SK-N-SH (cell line): ENCODE measurements at regions of chr3 and their contacts with region 1.

Region 1: GRCh38 chr3:132343018-132343612 is 25.9 kb downstream of the ACP3 start:
- DNase-seq: peak; percentile 41
- H3K4me3 ChIP-seq: peak overlapping the region in 1 of 2 experiments; percentile 25; a peak in 1 of 4 replicates
- H3K27ac ChIP-seq: no peak overlapping the region
- H3K4me1 ChIP-seq: no peaks in the 10 kb centered on the region
- H3K27me3 ChIP-seq: peaks cover 6% of the 10 kb centered on the region; the same call in 1 of the 2 replicates
- CTCF ChIP-seq: peak; percentile 82
- EP300 ChIP-seq: no peak
- RAD21 ChIP-seq: peak; percentile 77

Region 2: GRCh38 chr3:132253262-132253878 is 89.7 kb before region 1 on chr3:
- CTCF ChIA-PET with region 1: interaction called, 126 read pairs
- POLR2A ChIA-PET with region 1: no interaction called
- DNase-seq: peak; percentile 45
- H3K4me3 ChIP-seq: peak overlapping the region in 1 of 2 experiments; percentile 10; a peak in 1 of 4 replicates
- H3K27ac ChIP-seq: no peak overlapping the region
- H3K4me1 ChIP-seq: no peaks in the 10 kb centered on the region; a peak in 1 of 4 replicates
- H3K27me3 ChIP-seq: no peaks in the 10 kb centered on the region
- CTCF ChIP-seq: peak; percentile 86
- EP300 ChIP-seq: no peak
- RAD21 ChIP-seq: peak; percentile 76

Region 3: GRCh38 chr3:132279030-132279429 is 64.1 kb before region 1 on chr3:
- CTCF ChIA-PET with region 1: interaction called, 10 read pairs
- POLR2A ChIA-PET with region 1: no interaction called
- DNase-seq: no peak
- H3K4me3 ChIP-seq: no peak overlapping the region
- H3K27ac ChIP-seq: no peak overlapping the region
- H3K4me1 ChIP-seq: no peaks in the 10 kb centered on the region
- H3K27me3 ChIP-seq: no peaks in the 10 kb centered on the region; the same call in 1 of the 2 replicates
- CTCF ChIP-seq: no peak
- EP300 ChIP-seq: no peak
- RAD21 ChIP-seq: no peak

Region 4: GRCh38 chr3:132317229-132317948 is 25.7 kb before region 1 on chr3 and contains the start of gene ACP3:
- CTCF ChIA-PET with region 1: interaction called, 26 read pairs
- POLR2A ChIA-PET with region 1: no interaction called
- DNase-seq: no peak
- H3K4me3 ChIP-seq: peak within 1 kb of the TSS in 1 of 2 experiments; percentile 4; a peak in 1 of 4 replicates
- H3K27ac ChIP-seq: peak within 1 kb of the TSS; percentile 33 to 72; a peak in 3 of 4 replicates
- H3K4me1 ChIP-seq: peaks cover 3 to 4% of the 10 kb centered on the region in 2 experiments; a peak in 3 of 4 replicates
- H3K27me3 ChIP-seq: no peaks in the 10 kb centered on the region; the same call in 1 of the 2 replicates
- CTCF ChIP-seq: no peak
- EP300 ChIP-seq: no peak
- RAD21 ChIP-seq: no peak
- polyA plus RNA-seq, gene ACP3: 0.19 and 0.30 TPM in 2 replicates

Region 5: DNA sequence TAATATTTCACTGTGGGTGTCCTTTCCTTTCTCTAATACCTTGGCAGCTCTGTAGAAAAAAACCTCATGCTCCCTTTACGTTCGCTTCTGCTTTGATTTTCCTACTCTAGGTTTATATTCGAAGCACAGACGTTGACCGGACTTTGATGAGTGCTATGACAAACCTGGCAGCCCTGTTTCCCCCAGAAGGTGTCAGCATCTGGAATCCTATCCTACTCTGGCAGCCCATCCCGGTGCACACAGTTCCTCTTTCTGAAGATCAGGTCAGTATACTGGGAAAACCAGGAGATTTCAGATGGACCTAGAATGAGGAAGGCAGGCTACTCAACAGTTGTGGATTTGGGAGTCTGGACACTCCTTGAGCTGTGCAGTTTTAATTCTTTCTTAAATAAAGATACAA is 11.0 kb before region 1 on chr3:
- CTCF ChIA-PET with region 1: interaction called, 24 read pairs
- POLR2A ChIA-PET with region 1: no interaction called
- DNase-seq: no peak
- H3K4me3 ChIP-seq: no peak overlapping the region
- H3K27ac ChIP-seq: no peak overlapping the region
- H3K4me1 ChIP-seq: no peaks in the 10 kb centered on the region
- H3K27me3 ChIP-seq: 0 out of 2 replicates have a peak, but pooled peaks cover 6% of the 10 kb centered on the region
- CTCF ChIP-seq: no peak
- EP300 ChIP-seq: no peak
- RAD21 ChIP-seq: no peak

Region 6: DNA sequence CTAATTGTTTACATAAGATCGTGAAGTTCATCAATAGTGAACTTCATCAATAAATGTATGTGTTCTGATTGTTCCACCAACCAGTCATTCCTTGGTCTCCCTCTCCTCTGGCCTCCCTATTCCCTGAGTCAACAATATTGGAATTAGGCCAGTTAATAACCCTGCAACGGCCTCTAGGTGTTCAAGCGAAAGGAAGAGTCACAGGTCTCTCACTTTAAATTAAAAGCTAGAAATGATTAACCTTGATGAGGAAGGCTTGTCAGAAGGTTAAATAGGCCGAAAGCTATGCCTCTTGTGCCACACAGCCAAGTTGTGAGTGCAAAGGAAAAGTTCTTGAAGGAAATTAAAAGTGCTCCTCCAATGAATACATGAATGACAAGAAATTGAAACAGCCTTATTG is 164.5 kb after region 1 on chr3:
- CTCF ChIA-PET with region 1: no interaction called
- POLR2A ChIA-PET with region 1: no interaction called
- DNase-seq: no peak
- H3K4me3 ChIP-seq: no peak overlapping the region
- H3K27ac ChIP-seq: no peak overlapping the region
- H3K4me1 ChIP-seq: no peaks in the 10 kb centered on the region
- H3K27me3 ChIP-seq: no peaks in the 10 kb centered on the region
- CTCF ChIP-seq: no peak
- EP300 ChIP-seq: no peak
- RAD21 ChIP-seq: no peak